IMR-90 (cell line): ENCODE measurements at regions of chr18 and their contacts with region 1.

Region 1: DNA sequence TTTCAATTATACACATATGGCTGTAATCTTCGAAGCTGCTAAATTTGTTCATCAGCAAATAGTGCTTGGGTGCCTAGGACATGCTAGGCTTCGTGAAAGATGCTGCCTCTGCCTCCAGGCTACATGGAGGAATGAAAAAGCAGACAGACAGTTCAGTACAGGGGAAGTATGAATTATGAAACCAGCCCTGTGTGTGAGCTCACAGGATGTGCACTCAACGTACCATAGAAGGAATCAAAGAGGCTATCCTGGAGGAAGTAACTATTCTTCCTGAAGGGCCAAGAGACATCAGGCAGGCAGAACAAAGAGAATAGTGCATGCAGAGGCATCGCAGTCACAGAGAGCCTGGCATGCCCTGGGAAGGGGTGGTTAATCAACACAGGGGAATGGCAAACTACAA is 61.4 kb downstream of the DYM start:
- DNase-seq: peak; percentile 13
- ATAC-seq: no peak
- H3K4me3 ChIP-seq: no peak overlapping the region
- H3K27ac ChIP-seq: no peak overlapping the region
- H3K4me1 ChIP-seq: peaks cover 2% of the 10 kb centered on the region; the same call in 1 of the 2 replicates
- H3K27me3 ChIP-seq: no peaks in the 10 kb centered on the region
- CTCF ChIP-seq: no peak
- POLR2A ChIP-seq: no peak
- RAD21 ChIP-seq: no peak

Region 2: DNA sequence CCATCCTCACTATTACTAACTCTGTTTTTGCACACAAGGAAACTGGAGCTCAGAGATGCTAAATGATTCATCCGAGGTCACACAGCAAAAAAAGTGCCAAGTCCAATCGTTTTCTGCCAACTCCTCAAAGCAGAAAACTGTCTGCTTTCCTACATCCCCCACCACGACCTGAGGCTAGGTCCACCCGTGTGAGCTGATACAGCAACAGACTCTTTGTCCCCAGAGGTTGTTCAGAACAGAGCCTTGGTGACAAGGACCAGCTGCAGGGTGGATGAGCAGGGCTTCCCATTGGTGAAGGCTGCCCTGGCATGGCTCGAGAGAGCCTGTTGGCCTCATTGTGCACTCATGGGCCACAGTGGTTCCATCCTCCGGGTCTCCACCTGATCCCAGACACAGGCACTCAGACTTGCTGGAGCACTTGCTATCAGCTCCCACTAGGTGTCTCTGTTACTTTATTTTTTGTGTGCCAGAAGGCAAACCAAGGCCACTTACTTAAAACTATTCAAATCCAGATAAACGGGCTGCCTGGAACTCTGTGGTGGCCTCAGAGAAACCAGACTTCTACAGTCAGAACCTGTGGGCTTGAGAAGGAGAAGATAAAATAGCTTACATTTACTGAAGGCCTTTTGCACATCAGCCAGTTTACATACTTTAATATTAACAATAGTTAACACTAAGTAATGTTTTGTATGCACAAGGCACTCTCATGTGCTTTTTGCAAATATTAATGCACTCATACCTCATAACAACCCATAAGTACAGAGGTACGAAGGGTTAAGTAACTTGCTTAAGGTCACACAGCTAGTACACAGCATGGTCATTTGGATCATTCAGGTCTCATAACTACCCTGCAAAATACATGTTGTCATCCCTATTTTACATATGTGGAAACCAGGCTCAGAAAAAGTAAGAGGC is 923.1 kb before region 1 on chr18:
- CTCF ChIA-PET with region 1: no interaction called
- POLR2A ChIA-PET with region 1: no interaction called
- dilution Hi-C with region 1: no loop called
- in situ Hi-C with region 1: no loop called
- intact Hi-C with region 1: no loop called
- DNase-seq: peak; percentile 82
- ATAC-seq: peak; percentile 96
- H3K4me3 ChIP-seq: no peak overlapping the region
- H3K27ac ChIP-seq: no peak overlapping the region
- H3K4me1 ChIP-seq: no peaks in the 10 kb centered on the region
- H3K27me3 ChIP-seq: peaks cover 12% of the 10 kb centered on the region
- CTCF ChIP-seq: peak; percentile 86
- POLR2A ChIP-seq: no peak
- RAD21 ChIP-seq: peak; percentile 97

Region 3: GRCh38 chr18:49258938-49259337 is 140.1 kb before region 1 on chr18:
- CTCF ChIA-PET with region 1: no interaction called
- POLR2A ChIA-PET with region 1: no interaction called
- dilution Hi-C with region 1: no loop called
- in situ Hi-C with region 1: no loop called
- intact Hi-C with region 1: loop called (anchors 5 kb)
- DNase-seq: no peak
- ATAC-seq: no peak
- H3K4me3 ChIP-seq: no peak overlapping the region
- H3K27ac ChIP-seq: no peak overlapping the region
- H3K4me1 ChIP-seq: no peaks in the 10 kb centered on the region
- H3K27me3 ChIP-seq: no peaks in the 10 kb centered on the region
- CTCF ChIP-seq: no peak
- POLR2A ChIP-seq: no peak
- RAD21 ChIP-seq: no peak

Region 4: DNA sequence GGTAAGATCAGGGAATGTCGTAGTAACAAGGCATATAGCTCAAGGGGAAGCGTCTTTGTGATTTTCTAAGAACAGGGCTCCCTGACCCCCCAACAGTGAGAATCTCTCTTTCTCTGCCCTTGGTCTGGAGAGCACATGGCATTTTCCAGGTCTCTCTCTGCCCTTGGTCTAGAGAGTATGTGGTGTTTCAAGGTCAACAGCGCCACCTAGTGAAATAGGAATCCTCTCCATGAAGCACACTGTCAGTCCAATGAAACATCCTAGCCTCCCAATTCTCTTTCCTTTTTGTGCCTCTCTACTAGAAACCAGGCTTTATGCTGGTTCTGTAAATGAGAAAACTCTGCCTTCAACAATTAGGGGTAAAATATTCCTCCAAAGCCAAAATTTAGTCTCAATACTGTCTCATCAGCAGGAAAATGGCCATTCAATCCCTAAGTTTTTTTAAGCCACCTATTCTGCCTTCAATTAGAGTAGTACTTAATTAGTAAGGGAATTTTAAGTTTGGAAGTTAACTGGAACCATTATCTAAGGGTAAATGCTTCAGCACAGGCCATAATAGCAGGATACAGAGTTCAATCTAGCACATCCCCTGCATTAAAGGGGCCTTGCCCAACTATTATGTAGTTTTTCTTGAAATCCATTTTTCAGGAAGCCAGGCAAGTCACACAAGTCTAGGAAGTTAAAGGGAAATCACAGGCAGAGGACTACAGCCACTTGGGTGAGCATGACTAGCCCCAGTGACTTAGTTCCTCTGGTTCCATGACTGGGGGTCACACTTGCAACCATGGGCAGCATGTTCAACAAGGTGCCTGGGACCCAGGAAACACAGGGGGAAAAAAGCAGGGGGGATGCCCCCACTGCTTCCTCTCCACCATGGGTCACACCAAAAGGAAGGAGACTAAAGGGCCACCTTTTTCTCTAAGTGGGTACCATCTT is 49.1 kb after region 1 on chr18:
- CTCF ChIA-PET with region 1: no interaction called
- POLR2A ChIA-PET with region 1: no interaction called
- dilution Hi-C with region 1: no loop called
- in situ Hi-C with region 1: no loop called
- intact Hi-C with region 1: loop called (anchors 10 kb)
- DNase-seq: peak; percentile 70
- ATAC-seq: no peak
- H3K4me3 ChIP-seq: no peak overlapping the region
- H3K27ac ChIP-seq: no peak overlapping the region
- H3K4me1 ChIP-seq: no peaks in the 10 kb centered on the region
- H3K27me3 ChIP-seq: no peaks in the 10 kb centered on the region
- CTCF ChIP-seq: peak; percentile 48
- POLR2A ChIP-seq: no peak
- RAD21 ChIP-seq: peak; percentile 63

Region 5: DNA sequence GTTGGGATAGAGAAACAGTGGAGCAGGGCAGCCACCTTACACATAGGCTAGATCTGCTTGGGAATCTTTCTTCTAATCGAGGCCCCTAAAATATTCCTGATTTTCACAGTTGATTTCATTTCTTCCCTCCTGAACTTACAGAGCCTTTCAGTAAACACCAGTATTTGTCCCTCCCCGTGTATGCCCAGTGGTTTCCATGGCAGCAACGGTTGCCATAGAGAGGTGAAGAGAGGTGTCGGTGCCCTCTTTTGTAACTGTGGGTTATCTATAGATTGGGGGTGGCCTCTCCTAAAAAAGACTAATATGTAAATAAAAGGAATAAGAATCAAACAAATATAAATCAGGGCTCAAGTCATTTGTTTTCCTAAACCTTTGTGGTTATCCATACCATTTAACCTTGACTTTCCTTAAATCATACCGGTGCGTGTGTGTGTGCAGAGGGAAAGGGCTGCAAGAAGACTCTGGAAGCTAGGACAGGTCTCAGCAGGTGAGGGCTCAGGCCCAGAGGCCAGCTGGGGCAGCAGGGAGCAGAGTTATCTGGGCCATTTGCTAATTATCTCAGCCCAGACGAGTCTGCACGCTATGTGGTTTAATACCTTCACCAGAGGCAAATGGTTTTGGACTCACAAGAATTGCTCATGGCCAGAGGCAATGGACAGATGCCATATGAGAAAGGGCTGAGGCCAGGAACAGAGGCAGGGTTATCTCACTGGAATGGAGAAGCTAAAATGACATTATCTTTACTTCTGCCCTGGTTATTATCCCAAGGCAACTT is 198.3 kb after region 1 on chr18:
- CTCF ChIA-PET with region 1: no interaction called
- POLR2A ChIA-PET with region 1: no interaction called
- dilution Hi-C with region 1: no loop called
- in situ Hi-C with region 1: no loop called
- intact Hi-C with region 1: no loop called
- DNase-seq: no peak
- ATAC-seq: no peak
- H3K4me3 ChIP-seq: no peak overlapping the region
- H3K27ac ChIP-seq: no peak overlapping the region
- H3K4me1 ChIP-seq: no peaks in the 10 kb centered on the region
- H3K27me3 ChIP-seq: peaks cover 17% of the 10 kb centered on the region
- CTCF ChIP-seq: no peak
- POLR2A ChIP-seq: no peak
- RAD21 ChIP-seq: no peak